ENCODE measurements at regions of chr11 and their contacts with region 1.

Region 1: GRCh38 chr11:74929431-74930363 is 19.2 kb downstream of the XRRA1 start:
- DNase-seq: peak; percentile 87 to 93 (median 90)
- H3K4me3 ChIP-seq: no peak overlapping the region
- H3K27ac ChIP-seq: no peak overlapping the region
- H3K4me1 ChIP-seq: no peaks in the 10 kb centered on the region
- H3K27me3 ChIP-seq: no peaks in the 10 kb centered on the region

Region 2: GRCh38 chr11:74870485-74870884 is 59.2 kb before region 1 on chr11:
- CTCF ChIA-PET with region 1: no interaction called
- POLR2A ChIA-PET with region 1: no interaction called
- DNase-seq: peak in 2 of 3 donors; percentile 30 to 34
- H3K4me3 ChIP-seq: peak overlapping the region in 1 of 7 experiments; percentile 31
- H3K27ac ChIP-seq: no peak overlapping the region
- H3K4me1 ChIP-seq: no peaks in the 10 kb centered on the region
- H3K27me3 ChIP-seq: no peaks in the 10 kb centered on the region

Region 3: DNA sequence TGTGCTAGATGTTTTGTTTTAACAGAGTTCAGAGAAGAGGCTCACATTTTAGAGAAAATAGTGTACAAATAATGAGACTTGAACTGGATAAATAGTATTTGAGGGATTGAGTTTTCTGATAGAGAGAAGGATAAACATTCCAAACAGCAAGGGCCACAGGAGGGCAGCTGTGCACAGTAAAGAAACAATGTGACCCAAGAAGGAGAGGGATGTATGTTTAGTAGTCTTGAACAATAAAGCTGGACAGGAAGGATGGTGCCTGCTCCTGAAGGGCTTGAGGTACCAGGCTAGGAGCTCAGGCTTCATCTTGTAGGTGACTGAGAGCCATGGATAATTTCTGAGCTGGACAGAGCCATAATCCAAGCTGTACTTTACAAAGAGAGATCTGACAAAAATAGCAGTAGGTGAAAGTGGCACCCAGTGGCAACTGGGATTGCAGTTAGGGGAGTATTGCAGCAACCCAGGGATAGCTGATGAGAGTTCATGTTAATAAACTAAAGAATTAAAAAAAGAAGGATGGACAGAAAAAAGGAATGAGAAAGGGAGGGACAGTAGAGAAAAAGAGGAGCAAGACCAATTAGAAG is 11.7 kb after region 1 on chr11:
- CTCF ChIA-PET with region 1: interaction called, 26 read pairs
- POLR2A ChIA-PET with region 1: no interaction called
- DNase-seq: no peak
- H3K4me3 ChIP-seq: no peak overlapping the region
- H3K27ac ChIP-seq: no peak overlapping the region
- H3K4me1 ChIP-seq: no peaks in the 10 kb centered on the region
- H3K27me3 ChIP-seq: no peaks in the 10 kb centered on the region

Region 4: GRCh38 chr11:75022759-75023396 is 93.2 kb after region 1 on chr11:
- CTCF ChIA-PET with region 1: interaction called, 14 read pairs
- POLR2A ChIA-PET with region 1: no interaction called
- DNase-seq: peak; percentile 73 to 87 (median 80)
- H3K4me3 ChIP-seq: no peak overlapping the region
- H3K27ac ChIP-seq: no peak overlapping the region
- H3K4me1 ChIP-seq: no peaks in the 10 kb centered on the region
- H3K27me3 ChIP-seq: no peaks in the 10 kb centered on the region

Region 5: GRCh38 chr11:75031771-75032549 is 102.3 kb after region 1 on chr11:
- CTCF ChIA-PET with region 1: interaction called, 30 read pairs
- POLR2A ChIA-PET with region 1: no interaction called
- DNase-seq: peak; percentile 38 to 61 (median 55)
- H3K4me3 ChIP-seq: no peak overlapping the region
- H3K27ac ChIP-seq: no peak overlapping the region
- H3K4me1 ChIP-seq: no peaks in the 10 kb centered on the region
- H3K27me3 ChIP-seq: no peaks in the 10 kb centered on the region